ENCODE measurements at regions of chr10 and their contacts with region 1.

Region 1: GRCh38 chr10:28367929-28368484 is 65.1 kb upstream of the MPP7 start:
- DNase-seq: no peak
- H3K4me3 ChIP-seq: no peak overlapping the region
- H3K4me3 Mint-ChIP-seq: no peak overlapping the region
- H3K27ac Mint-ChIP-seq: peak overlapping the region; percentile 86
- H3K4me1 ChIP-seq: peaks cover 59% of the 10 kb centered on the region
- H3K4me1 Mint-ChIP-seq: peaks cover 46% of the 10 kb centered on the region
- H3K27me3 ChIP-seq: no peaks in the 10 kb centered on the region
- H3K27me3 Mint-ChIP-seq: no peaks in the 10 kb centered on the region
- CTCF ChIP-seq: no peak

Region 2: DNA sequence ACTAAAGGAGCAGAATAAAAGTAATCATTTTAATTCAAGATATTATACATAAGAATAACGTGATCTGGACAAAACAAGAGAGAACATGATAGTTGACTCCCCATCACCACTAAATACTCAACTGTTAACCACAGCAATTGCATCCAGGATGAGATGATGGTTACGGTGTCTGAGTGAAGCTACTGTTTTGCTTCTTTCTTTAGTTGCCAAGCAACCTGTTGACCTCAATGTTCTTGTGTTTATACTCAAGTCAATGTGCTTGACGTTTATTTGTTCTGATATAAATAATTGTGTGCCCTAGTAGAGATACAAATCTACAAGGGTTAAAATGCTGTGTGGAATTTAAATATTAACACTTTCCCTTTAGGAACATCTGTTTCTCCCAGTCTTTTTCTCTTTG is 33.7 kb before region 1 on chr10:
- CTCF ChIA-PET with region 1: no interaction called
- POLR2A ChIA-PET with region 1: interaction called, 11 read pairs
- intact Hi-C with region 1: loop called (anchors 1 kb)
- DNase-seq: peak in 1 of 2 experiments; percentile 53
- H3K4me3 ChIP-seq: no peak overlapping the region
- H3K4me3 Mint-ChIP-seq: peak overlapping the region; percentile 70
- H3K27ac Mint-ChIP-seq: peak overlapping the region; percentile 83
- H3K4me1 ChIP-seq: peaks cover 26% of the 10 kb centered on the region
- H3K4me1 Mint-ChIP-seq: peaks cover 29% of the 10 kb centered on the region
- H3K27me3 ChIP-seq: no peaks in the 10 kb centered on the region
- H3K27me3 Mint-ChIP-seq: no peaks in the 10 kb centered on the region
- CTCF ChIP-seq: no peak

Region 3: GRCh38 chr10:28355376-28355775 is 12.6 kb before region 1 on chr10:
- CTCF ChIA-PET with region 1: no interaction called
- POLR2A ChIA-PET with region 1: no interaction called
- intact Hi-C with region 1: loop called (anchors 1 kb)
- DNase-seq: no peak
- H3K4me3 ChIP-seq: no peak overlapping the region
- H3K4me3 Mint-ChIP-seq: no peak overlapping the region
- H3K27ac Mint-ChIP-seq: no peak overlapping the region
- H3K4me1 ChIP-seq: peaks cover 21% of the 10 kb centered on the region
- H3K4me1 Mint-ChIP-seq: peaks cover 49% of the 10 kb centered on the region
- H3K27me3 ChIP-seq: no peaks in the 10 kb centered on the region
- H3K27me3 Mint-ChIP-seq: no peaks in the 10 kb centered on the region
- CTCF ChIP-seq: no peak